Activated CD4-positive, alpha-beta memory T cell treated with anti-CD3 and anti-CD28 coated beads, Interleukin-2, amount 10 ng/mL, durations not matched to agents 7 days and 5 days (primary cell): ENCODE measurements at regions of chr15 and their contacts with region 1.

Region 1: GRCh38 chr15:77543159-77543882 is 89.4 kb downstream of the LINGO1 start:
- DNase-seq: peak; percentile 79
- H3K4me3 Mint-ChIP-seq: peak overlapping the region; percentile 66
- H3K27ac Mint-ChIP-seq: no peak overlapping the region
- H3K4me1 Mint-ChIP-seq: peaks cover 8% of the 10 kb centered on the region
- H3K27me3 Mint-ChIP-seq: no peaks in the 10 kb centered on the region

Region 2: DNA sequence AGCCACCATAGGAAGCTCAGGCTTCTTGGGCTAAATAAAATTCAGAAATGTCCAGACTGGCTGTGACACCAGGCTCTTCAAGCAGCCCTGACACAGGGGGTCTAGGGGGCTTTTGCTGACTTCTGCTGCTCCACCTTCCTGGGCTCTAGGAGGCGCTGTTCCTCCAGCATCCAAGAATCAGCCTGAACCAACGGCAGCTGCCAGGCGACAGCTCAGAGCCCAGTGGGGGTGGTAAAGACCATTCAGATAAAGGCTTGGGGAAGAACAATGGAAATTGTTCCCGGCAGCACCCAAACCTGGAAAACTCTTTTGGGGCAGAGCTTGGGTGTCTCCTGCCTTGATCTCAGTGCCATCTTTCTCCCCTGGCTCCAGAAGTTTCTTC is 570.0 kb before region 1 on chr15:
- CTCF ChIA-PET with region 1: interaction called, 12 read pairs
- POLR2A ChIA-PET with region 1: no interaction called
- DNase-seq: peak; percentile 71
- H3K4me3 Mint-ChIP-seq: no peak overlapping the region
- H3K27ac Mint-ChIP-seq: no peak overlapping the region
- H3K4me1 Mint-ChIP-seq: peaks cover 25% of the 10 kb centered on the region
- H3K27me3 Mint-ChIP-seq: peaks cover 1% of the 10 kb centered on the region

Region 3: DNA sequence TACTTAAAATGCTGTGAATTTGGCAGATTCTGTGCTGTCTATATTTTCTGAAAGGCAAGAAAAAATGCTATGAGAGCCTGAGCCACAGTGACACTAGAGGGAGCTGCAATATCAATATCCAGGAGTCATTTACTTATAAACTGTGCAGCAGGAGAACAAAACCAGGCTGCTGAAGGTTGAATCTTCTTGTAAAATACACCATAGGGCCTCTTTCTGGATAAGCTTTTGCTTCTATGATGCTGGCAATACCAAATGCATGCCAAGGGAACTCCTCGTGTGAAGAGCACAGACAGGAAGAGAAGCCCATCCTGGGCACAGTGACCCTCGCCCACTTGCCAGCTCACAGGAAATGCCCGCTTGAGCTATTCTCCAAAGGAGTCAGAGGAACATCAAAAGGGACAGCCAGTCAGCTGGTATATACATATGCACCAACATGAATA is 424.4 kb before region 1 on chr15:
- CTCF ChIA-PET with region 1: interaction called, 51 read pairs
- POLR2A ChIA-PET with region 1: no interaction called
- DNase-seq: peak; percentile 35
- H3K4me3 Mint-ChIP-seq: no peak overlapping the region
- H3K27ac Mint-ChIP-seq: no peak overlapping the region
- H3K4me1 Mint-ChIP-seq: peaks cover 4% of the 10 kb centered on the region
- H3K27me3 Mint-ChIP-seq: peaks cover 2% of the 10 kb centered on the region

Region 4: GRCh38 chr15:77186594-77187011 is 356.7 kb before region 1 on chr15:
- CTCF ChIA-PET with region 1: interaction called, 38 read pairs
- POLR2A ChIA-PET with region 1: no interaction called
- DNase-seq: no peak
- H3K4me3 Mint-ChIP-seq: no peak overlapping the region
- H3K27ac Mint-ChIP-seq: no peak overlapping the region
- H3K4me1 Mint-ChIP-seq: peaks cover 39% of the 10 kb centered on the region
- H3K27me3 Mint-ChIP-seq: no peaks in the 10 kb centered on the region

Region 5: DNA sequence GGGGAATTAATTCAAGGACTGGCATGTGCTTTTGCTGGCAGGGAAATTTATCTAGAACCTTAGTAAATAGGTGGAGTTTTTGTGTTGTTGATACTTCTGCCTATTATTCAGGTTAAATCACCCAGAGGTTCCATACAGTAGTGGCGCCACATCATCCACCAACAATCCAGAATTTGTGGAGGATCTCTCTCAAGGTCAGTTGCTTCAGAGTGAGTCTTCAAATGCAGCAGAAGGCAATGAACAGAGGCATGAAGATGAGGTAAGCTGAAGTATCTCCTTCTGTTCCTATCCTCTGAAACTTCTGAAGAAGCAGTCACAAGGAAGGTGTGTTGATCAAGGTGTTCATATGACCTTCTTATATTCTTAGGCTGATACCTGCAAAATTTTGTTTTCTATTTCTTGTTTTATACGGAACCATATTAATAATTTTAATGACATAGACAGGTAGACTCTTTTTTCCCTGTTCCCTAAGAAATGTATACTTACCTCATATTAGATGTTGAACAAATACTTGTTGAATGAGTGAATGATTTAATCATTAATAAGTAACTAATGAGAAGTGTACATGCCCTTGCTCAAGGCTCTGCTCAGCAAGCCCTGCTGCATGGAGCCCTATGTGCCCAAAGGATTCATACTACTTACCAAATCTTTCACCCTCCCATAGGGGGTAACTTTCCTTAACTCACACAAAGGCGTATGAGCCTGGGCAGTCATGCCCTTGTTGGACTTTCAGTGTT is 79.0 kb before region 1 on chr15:
- CTCF ChIA-PET with region 1: no interaction called
- POLR2A ChIA-PET with region 1: no interaction called
- DNase-seq: no peak
- H3K4me3 Mint-ChIP-seq: no peak overlapping the region
- H3K27ac Mint-ChIP-seq: no peak overlapping the region
- H3K4me1 Mint-ChIP-seq: no peaks in the 10 kb centered on the region
- H3K27me3 Mint-ChIP-seq: no peaks in the 10 kb centered on the region

Region 6: DNA sequence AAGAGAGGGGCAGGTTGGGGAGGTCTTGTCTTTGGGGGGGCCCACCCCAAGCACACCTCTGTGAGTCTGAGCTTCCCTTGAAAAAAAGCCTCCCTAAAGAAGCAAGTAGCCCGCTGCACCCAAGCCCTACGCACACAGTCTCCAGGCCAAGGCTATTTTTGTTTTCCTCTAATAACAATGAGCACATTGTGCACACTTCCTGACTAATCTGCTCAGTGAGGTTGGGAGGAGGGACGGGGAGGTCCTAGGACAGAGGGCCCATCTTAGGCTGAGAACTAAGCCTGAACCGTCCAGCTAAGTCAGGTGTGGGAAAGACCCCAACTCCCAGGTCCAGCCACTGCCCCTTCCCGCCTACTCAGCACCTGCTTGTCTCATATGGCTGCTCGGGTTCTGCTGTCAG is 35.4 kb before region 1 on chr15:
- CTCF ChIA-PET with region 1: interaction called, 10 read pairs
- POLR2A ChIA-PET with region 1: no interaction called
- DNase-seq: no peak
- H3K4me3 Mint-ChIP-seq: no peak overlapping the region
- H3K27ac Mint-ChIP-seq: no peak overlapping the region
- H3K4me1 Mint-ChIP-seq: peaks cover 7% of the 10 kb centered on the region
- H3K27me3 Mint-ChIP-seq: no peaks in the 10 kb centered on the region